ENCODE measurements at regions of chr6 and their contacts with region 1.

Region 1: GRCh38 chr6:2841264-2842138 is at the start of gene SERPINB1:
- DNase-seq: peak; percentile 90
- H3K4me3 ChIP-seq: peak within 1 kb of the TSS; percentile 61 to 67
- H3K27ac ChIP-seq: peak within 1 kb of the TSS; percentile 90 to 92
- H3K4me1 ChIP-seq: peaks cover 19% of the 10 kb centered on the region
- H3K27me3 ChIP-seq: no peaks in the 10 kb centered on the region
- CTCF ChIP-seq: peak in 1 of 3 experiments; percentile 14
- POLR2A ChIP-seq: no peak
- total RNA-seq, gene SERPINB1: 15.0 to 19.6 TPM

Region 2: DNA sequence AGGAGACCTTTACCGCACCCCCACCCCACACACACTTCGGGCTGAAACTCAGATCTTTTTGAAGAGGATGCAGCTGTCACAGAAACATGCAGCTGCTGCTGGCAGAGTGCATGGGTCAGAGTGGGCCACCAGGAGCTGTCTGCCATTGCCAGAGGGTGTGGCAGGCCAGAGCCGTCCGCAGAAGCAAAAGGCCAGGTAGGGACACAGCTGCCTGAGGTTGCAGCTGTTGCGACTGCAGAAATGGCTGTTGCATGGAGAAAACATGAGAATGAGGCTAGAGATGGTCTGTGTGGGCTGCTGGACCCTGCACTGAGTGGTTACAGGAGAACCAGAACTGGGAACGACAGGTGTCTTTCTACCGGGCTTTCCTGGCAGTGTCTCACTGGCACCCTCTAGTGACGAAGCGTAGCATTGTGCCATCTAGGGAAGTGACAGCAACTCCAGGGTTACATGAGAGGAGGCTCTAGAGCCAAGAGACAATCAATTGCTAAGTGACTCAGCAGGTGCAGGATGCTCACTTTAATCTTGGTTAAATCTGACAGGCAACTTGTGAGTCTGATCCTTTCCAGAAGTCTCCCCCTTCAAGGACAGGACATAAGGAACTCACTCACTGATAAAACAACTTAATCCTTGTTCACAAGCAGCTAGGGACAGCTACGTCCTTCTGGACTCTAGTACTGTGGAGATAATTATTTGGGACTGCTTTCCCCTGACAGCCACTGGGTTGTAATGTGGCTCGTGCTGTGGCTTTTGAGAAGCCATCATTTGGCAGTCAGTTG is 90.7 kb after region 1 on chr6:
- intact Hi-C with region 1: loop called (anchors 10 kb)
- DNase-seq: peak; percentile 92
- H3K4me3 ChIP-seq: no peak overlapping the region
- H3K27ac ChIP-seq: no peak overlapping the region
- H3K4me1 ChIP-seq: no peaks in the 10 kb centered on the region
- H3K27me3 ChIP-seq: no peaks in the 10 kb centered on the region
- CTCF ChIP-seq: peak; percentile 75 to 93 (median 79)
- POLR2A ChIP-seq: no peak

Region 3: DNA sequence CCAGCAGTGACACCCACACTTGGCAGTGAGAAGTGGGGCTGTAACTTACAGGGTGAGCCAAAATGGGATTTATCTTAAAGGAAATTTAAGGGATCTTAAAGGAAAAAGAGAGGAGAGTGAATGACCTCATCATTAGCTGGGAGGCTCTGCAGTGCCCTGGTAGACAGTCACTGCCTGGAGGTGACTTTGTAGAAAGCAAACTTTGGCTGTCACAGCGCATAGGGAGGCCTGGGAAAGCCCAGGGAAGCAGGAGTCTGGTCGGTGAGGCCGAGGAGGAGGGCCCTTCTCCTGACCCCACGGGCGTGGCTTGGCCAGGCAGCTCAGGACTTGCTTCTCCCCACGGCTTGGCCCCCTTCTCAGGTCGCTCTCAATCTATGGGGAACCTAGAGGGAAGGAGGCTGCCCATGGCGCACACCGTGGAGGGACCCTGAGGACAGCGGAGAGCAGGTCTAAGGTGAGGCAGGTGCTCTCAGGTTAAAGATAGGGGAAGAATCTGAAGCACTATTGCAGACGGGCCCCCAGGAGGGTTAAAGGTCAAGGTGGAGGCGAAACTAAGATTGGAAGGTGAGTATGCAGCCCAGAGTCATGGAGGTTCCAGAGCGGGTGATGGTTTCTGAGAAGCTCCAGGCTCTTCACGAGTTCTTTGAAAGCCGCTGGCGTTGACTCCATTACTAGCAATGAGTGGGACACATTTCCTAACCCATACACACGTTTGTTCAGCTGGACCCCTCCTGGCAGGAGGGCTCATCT is 211.2 kb after region 1 on chr6:
- intact Hi-C with region 1: loop called (anchors 10 kb)
- DNase-seq: no peak
- H3K4me3 ChIP-seq: peak overlapping the region; percentile 57 to 60
- H3K27ac ChIP-seq: no peak overlapping the region
- H3K4me1 ChIP-seq: no peaks in the 10 kb centered on the region
- H3K27me3 ChIP-seq: no peaks in the 10 kb centered on the region
- CTCF ChIP-seq: no peak
- POLR2A ChIP-seq: no peak

Measured in testis (tissue), 5 donors.